ENCODE measurements at regions of chr12 and their contacts with region 1.

Region 1: GRCh38 chr12:111396726-111397445 is 8.8 kb upstream of the SH2B3 start:
- DNase-seq: peak; percentile 89
- ATAC-seq: peak; percentile 93
- H3K4me3 Mint-ChIP-seq: peak overlapping the region; percentile 48
- H3K27ac Mint-ChIP-seq: no peak overlapping the region
- H3K4me1 Mint-ChIP-seq: no peaks in the 10 kb centered on the region
- H3K27me3 Mint-ChIP-seq: no peaks in the 10 kb centered on the region; the same call in 1 of the 2 replicates
- CTCF ChIP-seq: peak; percentile 99

Region 2: DNA sequence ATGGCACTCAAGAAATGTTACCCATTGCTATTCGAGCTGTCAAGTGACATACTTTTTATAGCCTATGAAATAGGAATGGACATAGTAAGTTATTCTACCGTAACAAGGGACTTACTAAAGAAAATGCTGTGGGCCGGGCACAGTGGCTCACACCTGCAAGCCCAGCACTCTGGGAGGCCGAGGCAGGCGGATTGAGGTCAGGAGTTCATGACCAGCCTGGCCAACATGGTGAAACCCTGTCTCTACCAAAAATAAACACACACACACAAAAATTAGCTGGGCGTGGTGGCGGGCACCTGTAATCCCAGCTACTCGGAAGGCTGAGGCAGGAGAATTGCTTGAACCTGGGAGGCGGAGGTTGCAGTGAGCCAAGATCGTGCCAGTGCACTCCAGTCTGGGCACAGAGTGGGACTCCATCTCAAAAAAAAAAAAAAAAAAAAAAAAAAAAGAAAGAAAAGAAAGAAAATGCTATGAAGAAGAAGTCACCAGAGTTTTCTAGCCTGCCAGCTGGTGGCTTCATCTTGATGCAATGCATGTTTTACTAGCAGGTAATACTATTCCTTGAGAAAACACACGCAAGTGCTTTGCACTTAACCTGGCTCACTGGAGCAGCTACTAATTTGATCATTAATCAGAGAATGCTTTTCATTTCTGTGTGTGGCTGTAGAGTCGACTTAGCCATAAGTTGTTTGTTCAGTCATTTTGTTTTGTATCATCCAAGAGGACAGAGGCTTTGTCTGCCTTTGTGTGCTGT is 309.8 kb before region 1 on chr12:
- CTCF ChIA-PET with region 1: no interaction called
- POLR2A ChIA-PET with region 1: no interaction called
- DNase-seq: no peak
- ATAC-seq: no peak
- H3K4me3 Mint-ChIP-seq: no peak overlapping the region
- H3K27ac Mint-ChIP-seq: no peak overlapping the region
- H3K4me1 Mint-ChIP-seq: peaks cover 21% of the 10 kb centered on the region
- H3K27me3 Mint-ChIP-seq: no peaks in the 10 kb centered on the region
- CTCF ChIP-seq: no peak

Region 3: GRCh38 chr12:111359231-111359913 is 37.5 kb before region 1 on chr12:
- CTCF ChIA-PET with region 1: interaction called, 14 read pairs
- POLR2A ChIA-PET with region 1: no interaction called
- DNase-seq: no peak
- ATAC-seq: no peak
- H3K4me3 Mint-ChIP-seq: no peak overlapping the region
- H3K27ac Mint-ChIP-seq: peak overlapping the region; percentile 22
- H3K4me1 Mint-ChIP-seq: no peaks in the 10 kb centered on the region; the same call in 1 of the 2 replicates
- H3K27me3 Mint-ChIP-seq: no peaks in the 10 kb centered on the region
- CTCF ChIP-seq: no peak

Region 4: GRCh38 chr12:111386885-111387284 is 10.0 kb before region 1 on chr12:
- CTCF ChIA-PET with region 1: interaction called, 28 read pairs
- POLR2A ChIA-PET with region 1: interaction called, 4 read pairs
- DNase-seq: no peak
- ATAC-seq: no peak
- H3K4me3 Mint-ChIP-seq: no peak overlapping the region
- H3K27ac Mint-ChIP-seq: no peak overlapping the region
- H3K4me1 Mint-ChIP-seq: no peaks in the 10 kb centered on the region
- H3K27me3 Mint-ChIP-seq: peaks cover 2% of the 10 kb centered on the region; the same call in 1 of the 2 replicates
- CTCF ChIP-seq: no peak

Region 5: GRCh38 chr12:111434680-111435338 is 37.9 kb after region 1 on chr12:
- CTCF ChIA-PET with region 1: interaction called, 17 read pairs
- POLR2A ChIA-PET with region 1: no interaction called
- DNase-seq: no peak
- ATAC-seq: peak; percentile 10
- H3K4me3 Mint-ChIP-seq: peak overlapping the region; percentile 4; the same call in 1 of the 2 replicates
- H3K27ac Mint-ChIP-seq: peak overlapping the region; percentile 95
- H3K4me1 Mint-ChIP-seq: peaks cover 56% of the 10 kb centered on the region
- H3K27me3 Mint-ChIP-seq: no peaks in the 10 kb centered on the region
- CTCF ChIP-seq: no peak

Region 6: GRCh38 chr12:111451649-111452129 is 54.8 kb after region 1 on chr12:
- CTCF ChIA-PET with region 1: interaction called, 116 read pairs
- POLR2A ChIA-PET with region 1: no interaction called
- DNase-seq: no peak
- ATAC-seq: no peak
- H3K4me3 Mint-ChIP-seq: no peak overlapping the region
- H3K27ac Mint-ChIP-seq: peak overlapping the region; percentile 67; the same call in 1 of the 2 replicates
- H3K4me1 Mint-ChIP-seq: peaks cover under 1% of the 10 kb centered on the region; the same call in 1 of the 2 replicates
- H3K27me3 Mint-ChIP-seq: no peaks in the 10 kb centered on the region
- CTCF ChIP-seq: peak; percentile 75

Region 7: DNA sequence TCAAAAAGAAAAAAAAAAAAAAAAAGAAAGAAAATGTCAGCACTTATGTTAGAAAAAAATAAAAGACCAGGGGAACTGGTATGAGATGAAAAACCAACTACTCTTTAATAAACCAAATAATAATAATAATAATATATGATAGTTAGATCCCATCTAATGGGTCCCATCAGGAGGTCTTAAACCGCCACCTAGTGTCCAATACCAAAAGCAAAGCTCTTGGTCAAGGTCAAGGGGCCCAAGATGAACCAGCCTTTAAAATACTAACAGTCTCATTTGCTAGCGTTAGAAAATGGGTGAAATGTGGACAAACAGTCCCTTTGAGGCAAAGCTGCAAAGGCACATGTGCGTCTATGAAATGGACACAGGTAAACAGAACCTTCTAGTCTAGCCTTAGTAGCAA is 276.6 kb after region 1 on chr12:
- CTCF ChIA-PET with region 1: interaction called, 10 read pairs
- POLR2A ChIA-PET with region 1: no interaction called
- DNase-seq: no peak
- ATAC-seq: no peak
- H3K4me3 Mint-ChIP-seq: no peak overlapping the region
- H3K27ac Mint-ChIP-seq: no peak overlapping the region
- H3K4me1 Mint-ChIP-seq: no peaks in the 10 kb centered on the region
- H3K27me3 Mint-ChIP-seq: no peaks in the 10 kb centered on the region
- CTCF ChIP-seq: peak; percentile 20; the same call in 1 of the 2 replicates

Measured in WTC11 (cell line).